Aorta (tissue), 5 donors: ENCODE measurements at regions of chr3 and their contacts with region 1.

Region 1: GRCh38 chr3:129627429-129628168 is 21.1 kb upstream of the PLXND1 start:
- DNase-seq: peak; percentile 87 to 88
- ATAC-seq: peak; percentile 76
- H3K4me3 ChIP-seq: peak overlapping the region; percentile 5 to 36
- H3K27ac ChIP-seq: peak overlapping the region; percentile 77 to 98
- H3K4me1 ChIP-seq: no peaks in the 10 kb centered on the region
- H3K27me3 ChIP-seq: no peaks in the 10 kb centered on the region

Region 2: GRCh38 chr3:129490242-129491045 is 137.2 kb before region 1 on chr3:
- intact Hi-C with region 1: loop called in 1 of 2 experiments (anchors 5 kb)
- DNase-seq: peak; percentile 92 to 95
- ATAC-seq: peak; percentile 92
- H3K4me3 ChIP-seq: no peak overlapping the region
- H3K27ac ChIP-seq: peak overlapping the region; percentile 62 to 86
- H3K4me1 ChIP-seq: peaks cover 0 to 2% of the 10 kb centered on the region in 2 donors
- H3K27me3 ChIP-seq: no peaks in the 10 kb centered on the region